ENCODE measurements at regions of chr16 and their contacts with region 1.

Region 1: DNA sequence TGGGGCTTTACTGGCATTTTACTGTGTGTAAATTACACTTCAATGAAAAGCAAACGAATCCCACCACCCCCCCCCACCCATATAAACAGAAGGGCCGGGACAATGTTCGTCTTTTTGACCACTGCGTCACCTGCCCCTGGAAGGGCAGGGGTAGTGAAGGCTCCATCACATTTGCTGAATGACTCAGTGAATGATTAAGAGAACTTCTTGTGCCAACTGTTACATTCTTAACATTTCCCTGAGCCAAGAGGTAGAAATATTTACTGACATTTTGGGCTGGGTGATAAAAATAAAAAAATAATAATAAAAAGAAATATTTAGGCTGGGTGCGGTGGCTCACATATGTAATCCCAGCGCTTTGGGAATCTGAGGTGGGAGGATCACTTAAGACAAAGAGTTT is 24.1 kb downstream of the C16orf96 start:
- DNase-seq: no peak
- ATAC-seq: no peak
- H3K4me3 ChIP-seq: no peak overlapping the region
- H3K27ac ChIP-seq: no peak overlapping the region
- H3K4me1 ChIP-seq: no peaks in the 10 kb centered on the region
- H3K27me3 ChIP-seq: peaks cover 2% of the 10 kb centered on the region; the same call in 1 of the 2 replicates
- CTCF ChIP-seq: no peak
- POLR2A ChIP-seq: no peak
- RAD21 ChIP-seq: no peak

Region 2: DNA sequence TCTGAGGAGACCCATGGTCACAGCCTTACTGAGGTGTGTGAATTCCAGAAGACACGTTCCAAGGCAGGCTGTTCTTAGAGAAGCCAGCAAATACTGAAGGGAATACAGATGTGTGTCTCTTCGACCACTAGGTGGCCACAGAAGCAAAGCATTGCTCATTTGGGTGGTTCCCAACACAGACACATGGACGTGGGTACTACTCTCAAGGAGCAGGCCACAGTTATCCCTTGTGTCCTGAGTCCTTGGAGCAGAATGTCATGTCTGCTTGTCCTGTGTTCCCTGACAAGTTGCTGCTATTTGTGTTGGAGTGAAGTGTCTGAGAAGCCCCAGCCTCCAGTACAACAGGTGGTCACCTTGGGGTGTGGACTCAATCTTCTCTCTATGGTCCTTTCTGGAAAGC is 73.8 kb before region 1 on chr16:
- CTCF ChIA-PET with region 1: no interaction called
- POLR2A ChIA-PET with region 1: no interaction called
- dilution Hi-C with region 1: no loop called
- in situ Hi-C with region 1: no loop called
- intact Hi-C with region 1: loop called (anchors 1 kb)
- DNase-seq: peak; percentile 82
- ATAC-seq: peak; percentile 95
- H3K4me3 ChIP-seq: no peak overlapping the region
- H3K27ac ChIP-seq: no peak overlapping the region
- H3K4me1 ChIP-seq: peaks cover 8% of the 10 kb centered on the region
- H3K27me3 ChIP-seq: no peaks in the 10 kb centered on the region
- CTCF ChIP-seq: peak; percentile 84
- POLR2A ChIP-seq: no peak
- RAD21 ChIP-seq: peak; percentile 91

Region 3: GRCh38 chr16:4529085-4530060 is 50.9 kb before region 1 on chr16:
- CTCF ChIA-PET with region 1: no interaction called
- POLR2A ChIA-PET with region 1: no interaction called
- dilution Hi-C with region 1: no loop called
- in situ Hi-C with region 1: no loop called
- intact Hi-C with region 1: no loop called
- DNase-seq: peak; percentile 82
- ATAC-seq: peak; percentile 82
- H3K4me3 ChIP-seq: no peak overlapping the region
- H3K27ac ChIP-seq: no peak overlapping the region
- H3K4me1 ChIP-seq: peaks cover 10% of the 10 kb centered on the region
- H3K27me3 ChIP-seq: no peaks in the 10 kb centered on the region
- CTCF ChIP-seq: no peak
- POLR2A ChIP-seq: no peak
- RAD21 ChIP-seq: no peak

Region 4: GRCh38 chr16:4649744-4650442 is 69.6 kb after region 1 on chr16:
- CTCF ChIA-PET with region 1: no interaction called
- POLR2A ChIA-PET with region 1: no interaction called
- dilution Hi-C with region 1: no loop called
- in situ Hi-C with region 1: no loop called
- intact Hi-C with region 1: no loop called
- DNase-seq: no peak
- ATAC-seq: no peak
- H3K4me3 ChIP-seq: no peak overlapping the region
- H3K27ac ChIP-seq: no peak overlapping the region
- H3K4me1 ChIP-seq: no peaks in the 10 kb centered on the region
- H3K27me3 ChIP-seq: no peaks in the 10 kb centered on the region
- CTCF ChIP-seq: no peak
- POLR2A ChIP-seq: no peak
- RAD21 ChIP-seq: no peak

Measured in IMR-90 (cell line).